ENCODE measurements at regions of chr17 and their contacts with region 1.

Region 1: DNA sequence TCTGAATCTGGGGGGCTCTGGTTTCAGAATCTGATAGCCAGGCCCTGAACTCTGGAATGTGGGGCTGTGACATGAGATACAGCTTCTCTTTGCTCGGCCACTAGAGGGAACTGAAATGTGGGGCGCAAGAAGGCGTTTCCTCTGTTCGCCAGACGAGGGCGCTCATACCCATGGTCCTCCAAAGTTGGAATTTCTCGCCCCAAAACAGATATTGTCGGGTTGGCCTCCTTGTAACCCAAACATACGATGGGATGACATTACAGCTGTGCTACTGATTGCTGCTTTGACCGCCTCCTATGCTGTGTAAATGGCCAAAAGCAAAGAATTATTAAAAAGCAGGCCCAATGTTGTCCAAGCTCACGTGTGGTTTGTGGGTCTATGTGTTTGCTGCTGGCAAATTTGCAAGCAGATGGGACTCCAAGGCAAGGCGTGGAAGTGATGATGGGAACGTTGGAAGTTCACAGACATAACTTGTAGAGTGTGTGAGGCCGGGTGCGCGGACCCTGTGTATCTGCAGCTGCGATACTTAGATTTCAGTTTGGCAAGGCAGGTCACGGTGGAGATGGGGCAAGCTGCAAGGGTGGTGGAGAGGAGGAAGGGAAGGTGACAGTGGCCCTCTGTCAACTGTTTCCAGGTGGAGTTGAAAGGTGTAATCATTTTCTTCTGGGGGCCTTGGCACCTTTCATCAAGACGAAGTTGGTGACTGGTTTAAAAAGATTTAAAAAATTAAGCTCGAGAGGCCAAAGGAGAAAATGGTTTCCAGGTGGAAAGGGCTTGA is 13.0 kb upstream of the MSI2 start:
- DNase-seq: peak; percentile 66 to 81 (median 67)
- H3K4me3 ChIP-seq: no peak overlapping the region
- H3K4me3 Mint-ChIP-seq: no peak overlapping the region
- H3K27ac ChIP-seq: no peak overlapping the region
- H3K27ac Mint-ChIP-seq: peak overlapping the region in 2 of 8 donors; percentile 48 to 72
- H3K4me1 ChIP-seq: no peaks in the 10 kb centered on the region
- H3K4me1 Mint-ChIP-seq: peaks cover 0 to 7% (median 0%) of the 10 kb centered on the region in 3 donors
- H3K27me3 ChIP-seq: peaks cover 4% of the 10 kb centered on the region
- H3K27me3 Mint-ChIP-seq: peaks cover 4 to 11% of the 10 kb centered on the region in 2 donors

Region 2: GRCh38 chr17:57221366-57222350 is 21.7 kb before region 1 on chr17:
- CTCF ChIA-PET with region 1: no interaction called
- POLR2A ChIA-PET with region 1: no interaction called
- DNase-seq: no peak
- H3K4me3 ChIP-seq: no peak overlapping the region
- H3K4me3 Mint-ChIP-seq: no peak overlapping the region
- H3K27ac ChIP-seq: no peak overlapping the region
- H3K27ac Mint-ChIP-seq: no peak overlapping the region
- H3K4me1 ChIP-seq: no peaks in the 10 kb centered on the region
- H3K4me1 Mint-ChIP-seq: no peaks in the 10 kb centered on the region
- H3K27me3 ChIP-seq: no peaks in the 10 kb centered on the region
- H3K27me3 Mint-ChIP-seq: peaks cover 20 to 27% of the 10 kb centered on the region in 2 donors

Region 3: GRCh38 chr17:57255776-57256681 is 12.7 kb after region 1 on chr17 and contains the start of gene MSI2:
- CTCF ChIA-PET with region 1: interaction called, 18 read pairs
- POLR2A ChIA-PET with region 1: interaction called, 10 read pairs
- DNase-seq: peak; percentile 87 to 97 (median 92)
- H3K4me3 ChIP-seq: peak within 1 kb of the TSS; percentile 78
- H3K4me3 Mint-ChIP-seq: peak within 1 kb of the TSS; percentile 92 to 98 (median 96)
- H3K27ac ChIP-seq: peak within 1 kb of the TSS; percentile 75
- H3K27ac Mint-ChIP-seq: peak within 1 kb of the TSS; percentile 84 to 99 (median 96)
- H3K4me1 ChIP-seq: peaks cover 28% of the 10 kb centered on the region
- H3K4me1 Mint-ChIP-seq: peaks cover 43 to 54% (median 50%) of the 10 kb centered on the region in 3 donors
- H3K27me3 ChIP-seq: no peaks in the 10 kb centered on the region
- H3K27me3 Mint-ChIP-seq: peaks cover 0 to 3% of the 10 kb centered on the region in 2 donors
- total RNA-seq, gene MSI2: 57.1 to 58.0 TPM

Region 4: DNA sequence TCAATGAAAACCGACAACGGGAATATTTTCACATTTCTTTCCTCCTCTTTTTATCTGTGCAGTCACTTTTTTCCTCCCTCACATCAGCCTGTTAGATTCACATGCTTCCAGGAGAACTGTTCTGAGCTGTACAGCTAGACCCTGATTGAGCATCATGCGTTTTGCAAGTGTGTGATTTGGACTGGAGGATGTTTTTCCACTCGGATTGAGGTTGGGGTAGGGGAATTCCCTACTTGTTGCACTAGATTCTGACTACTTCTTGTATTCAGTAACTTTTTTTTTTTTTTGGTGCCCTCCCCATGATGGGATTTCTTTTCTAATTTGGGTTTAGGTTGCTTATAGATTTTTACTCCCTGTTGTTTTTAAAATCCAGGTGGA is 17.7 kb after region 1 on chr17:
- CTCF ChIA-PET with region 1: interaction called, 18 read pairs
- POLR2A ChIA-PET with region 1: interaction called, 10 read pairs
- DNase-seq: no peak
- H3K4me3 ChIP-seq: no peak overlapping the region
- H3K4me3 Mint-ChIP-seq: peak overlapping the region in 1 of 7 donors; percentile 50
- H3K27ac ChIP-seq: no peak overlapping the region
- H3K27ac Mint-ChIP-seq: no peak overlapping the region
- H3K4me1 ChIP-seq: peaks cover 40% of the 10 kb centered on the region
- H3K4me1 Mint-ChIP-seq: peaks cover 69 to 86% (median 83%) of the 10 kb centered on the region in 3 donors
- H3K27me3 ChIP-seq: no peaks in the 10 kb centered on the region
- H3K27me3 Mint-ChIP-seq: peaks cover 0 to 4% of the 10 kb centered on the region in 2 donors

Region 5: DNA sequence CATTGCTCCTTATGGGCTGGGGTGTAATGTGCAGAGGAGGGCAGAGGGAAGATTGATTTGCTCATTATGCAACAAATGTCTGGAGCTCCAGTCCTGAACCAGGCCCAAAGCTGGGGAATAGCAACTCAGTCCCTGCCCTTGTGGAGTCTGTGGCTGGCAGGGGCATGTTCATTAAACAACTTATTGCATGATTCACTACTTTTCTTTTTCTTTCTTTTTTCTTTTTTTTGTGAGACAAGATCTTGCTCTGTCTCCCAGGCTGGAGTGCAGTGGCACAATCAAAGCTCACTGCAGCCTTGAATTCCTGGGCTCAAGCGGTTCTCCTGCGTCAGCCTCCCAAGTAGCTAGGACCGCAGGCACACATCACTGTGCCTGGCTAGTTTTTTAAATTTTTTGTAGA is 36.1 kb after region 1 on chr17:
- CTCF ChIA-PET with region 1: interaction called, 13 read pairs
- POLR2A ChIA-PET with region 1: no interaction called
- DNase-seq: no peak
- H3K4me3 ChIP-seq: no peak overlapping the region
- H3K4me3 Mint-ChIP-seq: no peak overlapping the region
- H3K27ac ChIP-seq: no peak overlapping the region
- H3K27ac Mint-ChIP-seq: peak overlapping the region in 2 of 8 donors; percentile 15 to 21
- H3K4me1 ChIP-seq: peaks cover 27% of the 10 kb centered on the region
- H3K4me1 Mint-ChIP-seq: peaks cover 64 to 83% (median 82%) of the 10 kb centered on the region in 3 donors
- H3K27me3 ChIP-seq: no peaks in the 10 kb centered on the region
- H3K27me3 Mint-ChIP-seq: no peaks in the 10 kb centered on the region

Region 6: DNA sequence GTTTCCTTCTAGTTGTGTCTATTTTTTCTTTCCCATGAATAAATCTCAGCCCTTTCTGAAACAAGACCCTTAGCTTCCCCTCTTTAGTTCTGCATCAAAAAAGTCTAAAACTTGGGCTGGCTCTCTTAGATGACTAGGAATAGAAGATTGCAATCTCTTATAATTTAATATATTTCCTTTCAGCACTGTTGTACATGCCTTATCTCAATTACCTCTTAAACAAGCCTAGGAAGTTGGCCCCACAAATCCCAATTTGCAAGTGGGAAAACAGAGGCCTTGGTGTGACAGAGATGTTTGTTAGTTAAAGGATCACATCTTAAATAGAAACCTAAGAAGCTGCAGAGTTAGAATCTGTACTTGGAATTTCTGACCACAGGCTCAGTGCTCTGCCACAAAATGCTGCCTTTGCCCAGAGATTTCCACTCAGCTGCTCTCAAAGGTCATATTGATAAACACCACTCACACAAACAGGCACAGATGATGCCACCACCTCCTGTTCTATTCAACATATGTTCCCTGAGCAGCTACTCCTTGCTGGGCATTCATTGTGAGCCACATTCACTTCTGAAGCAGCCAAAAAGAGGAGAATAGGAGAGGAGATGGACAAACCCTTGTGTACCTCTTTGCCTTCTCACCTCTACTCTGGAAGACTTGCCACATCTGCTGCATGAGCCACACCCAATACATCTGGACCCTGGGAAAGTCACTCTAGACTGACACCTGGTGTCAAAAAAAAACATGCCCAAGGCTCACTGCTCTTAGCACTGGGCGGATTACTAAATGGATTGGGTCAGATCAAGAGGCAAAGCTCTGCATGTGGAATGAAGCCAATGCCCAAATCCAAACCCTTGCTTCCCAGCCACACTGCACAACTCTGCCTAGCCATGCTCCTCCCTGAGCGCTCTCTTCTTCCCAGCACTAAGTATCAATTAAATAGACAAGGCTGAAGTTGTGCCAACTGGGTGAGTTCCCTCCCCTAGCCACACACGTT is 496.3 kb after region 1 on chr17:
- CTCF ChIA-PET with region 1: interaction called, 47 read pairs
- POLR2A ChIA-PET with region 1: no interaction called
- DNase-seq: peak in 1 of 5 donors; percentile 9
- H3K4me3 ChIP-seq: no peak overlapping the region
- H3K4me3 Mint-ChIP-seq: no peak overlapping the region
- H3K27ac ChIP-seq: no peak overlapping the region
- H3K27ac Mint-ChIP-seq: peak overlapping the region in 1 of 8 donors; percentile 4
- H3K4me1 ChIP-seq: peaks cover 7% of the 10 kb centered on the region
- H3K4me1 Mint-ChIP-seq: peaks cover 7 to 8% (median 7%) of the 10 kb centered on the region in 3 donors
- H3K27me3 ChIP-seq: no peaks in the 10 kb centered on the region
- H3K27me3 Mint-ChIP-seq: peaks cover 1 to 7% of the 10 kb centered on the region in 2 donors

Region 7: DNA sequence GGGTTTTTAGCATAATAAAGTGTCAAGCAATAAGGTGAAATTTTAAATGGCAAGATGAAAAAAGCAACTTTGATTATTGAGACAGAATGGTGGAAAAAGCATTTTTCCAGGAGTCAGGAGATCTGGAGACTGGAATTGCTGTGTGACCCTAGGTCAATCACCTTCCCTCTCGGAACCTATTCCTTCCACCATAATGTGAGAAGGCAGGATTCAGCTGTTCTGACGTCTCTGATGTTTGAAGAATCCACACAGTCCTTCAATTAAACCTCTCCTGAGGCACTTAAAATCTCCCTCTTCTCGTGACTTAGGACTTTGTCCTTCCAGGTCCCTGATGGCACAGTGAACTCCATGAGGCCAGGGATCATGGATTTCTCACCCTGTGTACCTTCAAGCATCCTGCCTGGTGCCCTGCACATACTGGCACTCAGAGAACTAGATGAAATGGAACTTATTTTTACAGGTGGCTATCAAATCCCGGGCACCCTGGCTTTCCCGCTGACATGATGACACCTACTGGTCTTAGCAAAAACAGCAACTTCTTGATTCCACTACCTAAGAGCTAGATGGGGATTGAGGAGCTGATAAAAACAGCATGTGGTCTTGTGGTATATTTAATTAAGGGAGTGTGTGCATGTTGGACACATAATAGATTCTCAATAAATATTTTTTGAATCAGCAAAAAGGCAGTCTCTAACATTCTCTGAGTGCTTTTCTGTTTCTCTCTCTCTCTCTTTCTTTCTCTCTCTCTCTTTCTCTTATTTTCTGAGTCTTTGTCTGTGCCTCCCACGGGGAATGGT is 504.1 kb after region 1 on chr17:
- CTCF ChIA-PET with region 1: interaction called, 47 read pairs
- POLR2A ChIA-PET with region 1: no interaction called
- DNase-seq: peak; percentile 8 to 54 (median 50)
- H3K4me3 ChIP-seq: no peak overlapping the region
- H3K4me3 Mint-ChIP-seq: no peak overlapping the region
- H3K27ac ChIP-seq: no peak overlapping the region
- H3K27ac Mint-ChIP-seq: peak overlapping the region in 2 of 8 donors; percentile 8 to 37
- H3K4me1 ChIP-seq: no peaks in the 10 kb centered on the region
- H3K4me1 Mint-ChIP-seq: peaks cover 7 to 15% (median 8%) of the 10 kb centered on the region in 3 donors
- H3K27me3 ChIP-seq: no peaks in the 10 kb centered on the region
- H3K27me3 Mint-ChIP-seq: peaks cover 0 to 6% of the 10 kb centered on the region in 2 donors

Measured in CD8-positive, alpha-beta memory T cell (primary cell).